ENCODE measurements at regions of chr1 and their contacts with region 1.

Region 1: DNA sequence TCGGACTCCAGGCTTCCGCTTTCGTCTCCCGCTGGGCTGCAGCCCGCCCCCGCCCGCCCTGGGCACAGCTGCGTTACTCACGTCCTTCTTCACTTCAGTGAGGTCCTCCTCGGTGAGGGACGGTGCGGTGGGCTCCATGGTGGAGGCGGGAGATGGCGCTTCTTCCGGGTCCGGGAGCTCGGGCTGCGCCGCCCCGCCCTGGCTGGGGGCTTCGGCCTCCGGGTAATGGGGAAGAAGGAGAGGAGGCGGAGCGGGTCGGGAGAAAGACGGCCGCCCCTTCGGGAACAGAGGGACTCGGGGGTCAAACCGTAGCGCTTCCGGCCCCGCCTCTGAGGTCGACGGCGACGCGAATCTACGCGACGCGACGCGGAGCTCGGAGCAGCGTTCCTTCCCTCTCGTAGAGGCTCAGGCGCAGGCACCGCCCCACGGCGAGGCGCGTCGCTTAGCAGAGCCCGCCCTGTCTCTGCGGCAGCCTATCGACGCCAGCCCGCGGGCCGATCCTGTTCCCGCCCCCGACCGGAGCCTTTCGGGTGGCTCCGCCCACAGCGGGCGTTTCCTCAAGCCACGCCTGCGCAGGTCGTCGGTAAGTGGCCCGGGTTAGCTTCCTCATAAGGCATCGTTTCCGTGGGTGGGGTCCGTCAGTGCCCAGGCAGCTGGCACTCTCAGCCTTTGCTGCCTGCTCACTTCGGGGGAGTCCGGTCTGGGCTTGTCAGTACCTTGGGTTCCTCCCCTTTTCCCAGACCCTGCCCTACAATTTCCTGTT is at the start of gene BCL10:
- DNase-seq: peak; percentile 95 to 98 (median 97)
- ATAC-seq: peak; percentile 97
- H3K4me3 ChIP-seq: peak within 1 kb of the TSS; percentile 89
- H3K4me3 Mint-ChIP-seq: peak within 1 kb of the TSS; percentile 82 to 95 (median 90)
- H3K27ac ChIP-seq: peak within 1 kb of the TSS; percentile 97
- H3K27ac Mint-ChIP-seq: peak within 1 kb of the TSS; percentile 84 to 97 (median 95)
- H3K4me1 ChIP-seq: peaks cover 17 to 28% of the 10 kb centered on the region in 2 donors
- H3K4me1 Mint-ChIP-seq: peaks cover 36 to 55% (median 47%) of the 10 kb centered on the region in 7 donors
- H3K27me3 ChIP-seq: no peaks in the 10 kb centered on the region
- H3K27me3 Mint-ChIP-seq: peaks cover 0 to 21% (median 0%) of the 10 kb centered on the region in 5 donors
- total RNA-seq, gene BCL10: 30.4 to 53.0 (median 35.4) TPM

Region 2: GRCh38 chr1:84433258-84434080 is 842.9 kb before region 1 on chr1:
- CTCF ChIA-PET with region 1: no interaction called
- POLR2A ChIA-PET with region 1: no interaction called
- intact Hi-C with region 1: loop called in 1 of 2 experiments (anchors 5 kb)
- DNase-seq: peak in 7 of 9 donors; percentile 71 to 85 (median 79)
- ATAC-seq: peak; percentile 92
- H3K4me3 ChIP-seq: peak overlapping the region; percentile 34
- H3K4me3 Mint-ChIP-seq: peak overlapping the region in 9 of 10 donors; percentile 29 to 82 (median 77)
- H3K27ac ChIP-seq: peak overlapping the region; percentile 73
- H3K27ac Mint-ChIP-seq: peak overlapping the region in 2 of 9 donors; percentile 85 to 90
- H3K4me1 ChIP-seq: peaks cover 23 to 41% of the 10 kb centered on the region in 2 donors
- H3K4me1 Mint-ChIP-seq: peaks cover 0 to 12% (median 9%) of the 10 kb centered on the region in 7 donors
- H3K27me3 ChIP-seq: no peaks in the 10 kb centered on the region
- H3K27me3 Mint-ChIP-seq: no peaks in the 10 kb centered on the region

Region 3: DNA sequence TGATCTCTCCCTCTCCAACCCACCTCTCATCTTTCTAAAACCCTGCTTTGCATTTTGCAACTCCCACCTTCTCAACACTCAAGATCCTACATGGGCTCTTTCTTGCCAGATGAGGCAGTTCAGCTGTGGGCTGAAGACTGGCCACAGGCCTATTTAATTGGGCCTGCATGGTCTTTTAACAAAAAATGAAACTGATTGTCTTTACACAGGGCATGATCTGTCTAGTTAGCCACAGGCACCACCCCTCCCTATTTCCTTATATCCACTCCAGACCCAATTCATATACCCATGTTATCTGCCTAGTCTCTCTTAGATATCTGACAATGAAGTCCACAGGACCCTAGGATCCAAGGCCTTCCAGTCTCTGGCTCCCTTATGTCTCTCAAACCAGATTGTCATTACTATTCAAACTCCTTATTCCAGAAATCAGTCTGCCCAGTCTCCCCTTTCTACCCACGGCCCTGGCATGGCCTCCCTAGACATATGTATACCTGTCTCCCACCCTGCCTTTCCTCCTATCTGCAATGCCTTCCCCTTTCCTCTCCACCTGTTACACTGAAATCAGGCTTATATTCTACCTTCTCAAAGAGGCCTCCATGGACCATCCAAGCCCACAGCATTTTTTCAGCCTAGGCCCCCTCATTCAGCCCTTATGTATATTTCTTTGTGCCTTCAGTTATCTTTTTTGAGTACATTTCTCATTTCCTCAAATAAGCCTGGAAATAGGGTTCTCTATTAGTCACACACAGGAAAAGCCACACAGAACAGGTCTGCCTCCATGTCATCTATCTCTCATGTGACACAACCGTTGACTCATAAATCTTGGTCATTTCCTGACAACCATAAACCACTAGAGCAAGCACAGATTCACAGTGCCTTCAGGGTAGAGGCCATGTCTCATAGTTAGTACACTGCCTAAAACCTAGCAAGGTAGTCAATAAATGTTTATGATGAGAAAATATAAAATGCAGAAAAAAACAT is 422.4 kb before region 1 on chr1:
- CTCF ChIA-PET with region 1: no interaction called
- POLR2A ChIA-PET with region 1: no interaction called
- intact Hi-C with region 1: loop called in 1 of 2 experiments (anchors 5 kb)
- DNase-seq: peak in 8 of 9 donors; percentile 16 to 56 (median 41)
- ATAC-seq: peak; percentile 96
- H3K4me3 ChIP-seq: no peak overlapping the region
- H3K4me3 Mint-ChIP-seq: peak overlapping the region in 6 of 10 donors; percentile 0 to 70 (median 14)
- H3K27ac ChIP-seq: peak overlapping the region; percentile 5
- H3K27ac Mint-ChIP-seq: peak overlapping the region; percentile 54 to 98 (median 87)
- H3K4me1 ChIP-seq: peaks cover 14 to 17% of the 10 kb centered on the region in 2 donors
- H3K4me1 Mint-ChIP-seq: peaks cover 23 to 52% (median 45%) of the 10 kb centered on the region in 7 donors
- H3K27me3 ChIP-seq: no peaks in the 10 kb centered on the region
- H3K27me3 Mint-ChIP-seq: peaks cover 0 to 8% (median 0%) of the 10 kb centered on the region in 5 donors

Region 4: GRCh38 chr1:85048296-85049064 is 227.9 kb before region 1 on chr1 and contains the start of gene MCOLN3:
- CTCF ChIA-PET with region 1: no interaction called
- POLR2A ChIA-PET with region 1: no interaction called
- intact Hi-C with region 1: loop called in 1 of 2 experiments (anchors 5 kb)
- DNase-seq: peak in 7 of 9 donors; percentile 9 to 56 (median 24)
- ATAC-seq: peak; percentile 67
- H3K4me3 ChIP-seq: peak within 1 kb of the TSS; percentile 38
- H3K4me3 Mint-ChIP-seq: peak within 1 kb of the TSS; percentile 70 to 86 (median 80)
- H3K27ac ChIP-seq: no peak within 1 kb of the TSS
- H3K27ac Mint-ChIP-seq: peak within 1 kb of the TSS in 1 of 9 donors; percentile 55
- H3K4me1 ChIP-seq: peaks cover 10 to 21% of the 10 kb centered on the region in 2 donors
- H3K4me1 Mint-ChIP-seq: peaks cover 7 to 35% (median 29%) of the 10 kb centered on the region in 7 donors
- H3K27me3 ChIP-seq: peaks cover 11 to 13% of the 10 kb centered on the region in 2 donors
- H3K27me3 Mint-ChIP-seq: peaks cover 47 to 60% (median 54%) of the 10 kb centered on the region in 5 donors
- total RNA-seq, gene MCOLN3: 0.77 to 11.1 (median 0.95) TPM

Region 5: GRCh38 chr1:85307987-85308832 is 31.8 kb after region 1 on chr1:
- CTCF ChIA-PET with region 1: no interaction called
- POLR2A ChIA-PET with region 1: interaction called, 3 read pairs
- intact Hi-C with region 1: loop called in 1 of 2 experiments (anchors 1 kb)
- DNase-seq: peak in 7 of 9 donors; percentile 26 to 49 (median 35)
- ATAC-seq: peak; percentile 83
- H3K4me3 ChIP-seq: no peak overlapping the region
- H3K4me3 Mint-ChIP-seq: peak overlapping the region in 9 of 10 donors; percentile 12 to 77 (median 60)
- H3K27ac ChIP-seq: no peak overlapping the region
- H3K27ac Mint-ChIP-seq: no peak overlapping the region
- H3K4me1 ChIP-seq: no peaks in the 10 kb centered on the region
- H3K4me1 Mint-ChIP-seq: peaks cover 0 to 10% (median 4%) of the 10 kb centered on the region in 7 donors
- H3K27me3 ChIP-seq: no peaks in the 10 kb centered on the region
- H3K27me3 Mint-ChIP-seq: peaks cover 24 to 62% (median 39%) of the 10 kb centered on the region in 5 donors

Region 6: DNA sequence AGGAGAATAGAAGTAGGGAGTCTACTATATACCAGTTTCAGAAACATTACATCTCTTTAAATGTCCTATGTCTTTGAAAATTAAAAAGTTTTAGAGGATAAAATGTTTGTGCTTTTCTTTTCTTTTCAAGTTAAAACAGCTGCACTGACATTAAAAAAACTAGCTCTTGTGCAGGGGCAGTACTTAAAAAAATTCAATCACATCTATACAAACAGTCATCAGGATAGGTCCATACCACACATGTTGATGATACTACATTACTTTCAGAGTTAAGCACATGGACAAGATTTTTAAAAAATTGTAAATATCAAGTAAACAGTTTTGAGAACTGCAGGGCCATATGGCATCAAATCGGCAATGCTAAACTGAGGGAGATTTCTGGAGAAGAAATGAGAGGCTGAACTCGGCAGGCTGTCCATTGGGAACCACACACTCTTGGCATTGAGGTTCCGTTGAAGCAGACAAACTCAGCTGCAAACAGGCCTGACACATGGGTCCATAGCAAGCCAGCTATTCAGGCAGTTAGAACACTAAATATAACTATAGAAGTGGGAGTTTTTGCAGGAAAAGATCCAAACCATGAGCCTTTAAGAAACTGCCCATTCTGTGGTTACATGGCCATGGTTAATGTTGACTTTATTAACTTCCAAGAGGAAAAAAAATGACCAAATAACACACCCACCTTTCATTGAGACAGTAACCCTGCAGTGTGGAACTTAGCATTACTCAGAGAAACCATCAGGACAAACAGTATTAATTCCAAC is 84.5 kb after region 1 on chr1:
- CTCF ChIA-PET with region 1: no interaction called
- POLR2A ChIA-PET with region 1: no interaction called
- intact Hi-C with region 1: no loop called
- DNase-seq: no peak
- ATAC-seq: no peak
- H3K4me3 ChIP-seq: no peak overlapping the region
- H3K4me3 Mint-ChIP-seq: no peak overlapping the region
- H3K27ac ChIP-seq: no peak overlapping the region
- H3K27ac Mint-ChIP-seq: no peak overlapping the region
- H3K4me1 ChIP-seq: no peaks in the 10 kb centered on the region
- H3K4me1 Mint-ChIP-seq: no peaks in the 10 kb centered on the region
- H3K27me3 ChIP-seq: no peaks in the 10 kb centered on the region
- H3K27me3 Mint-ChIP-seq: peaks cover 0 to 19% (median 0%) of the 10 kb centered on the region in 5 donors

Region 7: GRCh38 chr1:86704458-86704971 is 1428.1 kb after region 1 on chr1 and contains the start of gene SH3GLB1:
- CTCF ChIA-PET with region 1: no interaction called
- POLR2A ChIA-PET with region 1: no interaction called
- intact Hi-C with region 1: loop called in 1 of 2 experiments (anchors 10 kb)
- DNase-seq: peak; percentile 83 to 93 (median 92)
- ATAC-seq: peak; percentile 93
- H3K4me3 ChIP-seq: peak within 1 kb of the TSS; percentile 83
- H3K4me3 Mint-ChIP-seq: peak within 1 kb of the TSS; percentile 95 to 99 (median 97)
- H3K27ac ChIP-seq: peak within 1 kb of the TSS; percentile 86
- H3K27ac Mint-ChIP-seq: peak within 1 kb of the TSS; percentile 96 to 99 (median 97)
- H3K4me1 ChIP-seq: peaks cover 16 to 17% of the 10 kb centered on the region in 2 donors
- H3K4me1 Mint-ChIP-seq: peaks cover 34 to 67% (median 56%) of the 10 kb centered on the region in 7 donors
- H3K27me3 ChIP-seq: no peaks in the 10 kb centered on the region
- H3K27me3 Mint-ChIP-seq: no peaks in the 10 kb centered on the region
- total RNA-seq, gene SH3GLB1: 36.7 to 72.0 (median 49.8) TPM

Measured in naive thymus-derived CD4-positive, alpha-beta T cell (primary cell).